Pancreas (tissue), 10 donors: ENCODE measurements at regions of chr6 and their contacts with region 1.

Region 1: GRCh38 chr6:106444777-106445507 is 84.4 kb downstream of the CRYBG1 start:
- DNase-seq: peak in 3 of 6 donors; percentile 13 to 22 (median 16)
- ATAC-seq: peak; percentile 78 to 91 (median 88)
- H3K4me3 ChIP-seq: no peak overlapping the region
- H3K27ac ChIP-seq: no peak overlapping the region
- H3K4me1 ChIP-seq: peaks cover 0 to 7% (median 0%) of the 10 kb centered on the region in 3 donors
- H3K27me3 ChIP-seq: no peaks in the 10 kb centered on the region
- CTCF ChIP-seq: peak; percentile 51 to 83 (median 56)

Region 2: GRCh38 chr6:106560996-106561685 is 116.2 kb after region 1 on chr6:
- intact Hi-C with region 1: loop called in 2 of 3 experiments (anchors 5 to 10 kb)
- DNase-seq: no peak
- ATAC-seq: peak in 1 of 4 donors; percentile 12
- H3K4me3 ChIP-seq: no peak overlapping the region
- H3K27ac ChIP-seq: no peak overlapping the region
- H3K4me1 ChIP-seq: no peaks in the 10 kb centered on the region
- H3K27me3 ChIP-seq: no peaks in the 10 kb centered on the region
- CTCF ChIP-seq: no peak

Region 3: GRCh38 chr6:106568530-106568929 is 123.6 kb after region 1 on chr6:
- intact Hi-C with region 1: loop called in 2 of 3 experiments (anchors 5 to 10 kb)
- DNase-seq: no peak
- ATAC-seq: no peak
- H3K4me3 ChIP-seq: no peak overlapping the region
- H3K27ac ChIP-seq: no peak overlapping the region
- H3K4me1 ChIP-seq: no peaks in the 10 kb centered on the region
- H3K27me3 ChIP-seq: no peaks in the 10 kb centered on the region
- CTCF ChIP-seq: no peak

Region 4: DNA sequence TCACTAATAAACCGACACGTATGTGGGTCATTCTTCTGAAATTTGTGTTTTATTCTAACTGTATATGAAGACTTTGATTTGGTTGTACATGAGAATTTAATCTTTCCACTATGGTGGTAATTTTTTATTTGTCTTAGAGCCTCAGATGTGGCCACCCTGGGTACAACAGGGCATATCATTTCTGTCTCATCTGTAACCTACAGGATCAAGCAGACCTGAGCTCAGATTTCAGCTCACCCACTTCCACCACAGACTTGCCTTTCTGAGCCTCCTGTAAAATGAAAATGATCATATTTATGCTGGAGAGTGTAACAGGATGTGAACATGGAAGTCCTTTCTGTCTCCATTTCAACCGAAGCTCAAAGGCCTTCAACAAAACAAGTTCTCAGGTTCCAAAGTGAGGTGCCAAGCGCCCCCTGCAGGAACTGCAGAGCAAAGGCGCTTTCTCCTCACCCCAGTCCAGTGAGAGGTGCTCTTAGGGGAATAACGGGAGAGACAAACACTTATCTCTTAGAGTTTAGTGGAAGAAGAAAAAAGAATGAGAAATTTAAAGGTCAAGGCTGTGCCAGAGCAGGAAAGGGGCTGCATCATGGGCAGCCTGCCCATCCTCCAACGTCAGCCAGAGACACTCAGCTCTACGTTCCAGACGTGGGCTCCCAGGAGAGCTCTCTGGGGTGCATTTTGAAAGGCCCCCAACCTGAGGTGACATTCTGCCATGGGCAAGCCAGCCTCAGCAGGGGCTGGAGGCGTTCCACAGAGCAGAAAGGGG is 552.6 kb after region 1 on chr6:
- intact Hi-C with region 1: loop called in 2 of 3 experiments (anchors 5 to 10 kb)
- DNase-seq: peak; percentile 43 to 84 (median 70)
- ATAC-seq: peak; percentile 75 to 98 (median 90)
- H3K4me3 ChIP-seq: no peak overlapping the region
- H3K27ac ChIP-seq: no peak overlapping the region
- H3K4me1 ChIP-seq: no peaks in the 10 kb centered on the region
- H3K27me3 ChIP-seq: no peaks in the 10 kb centered on the region
- CTCF ChIP-seq: peak; percentile 69 to 81 (median 80)